ENCODE measurements at regions of chr1 and their contacts with region 1.

Region 1: DNA sequence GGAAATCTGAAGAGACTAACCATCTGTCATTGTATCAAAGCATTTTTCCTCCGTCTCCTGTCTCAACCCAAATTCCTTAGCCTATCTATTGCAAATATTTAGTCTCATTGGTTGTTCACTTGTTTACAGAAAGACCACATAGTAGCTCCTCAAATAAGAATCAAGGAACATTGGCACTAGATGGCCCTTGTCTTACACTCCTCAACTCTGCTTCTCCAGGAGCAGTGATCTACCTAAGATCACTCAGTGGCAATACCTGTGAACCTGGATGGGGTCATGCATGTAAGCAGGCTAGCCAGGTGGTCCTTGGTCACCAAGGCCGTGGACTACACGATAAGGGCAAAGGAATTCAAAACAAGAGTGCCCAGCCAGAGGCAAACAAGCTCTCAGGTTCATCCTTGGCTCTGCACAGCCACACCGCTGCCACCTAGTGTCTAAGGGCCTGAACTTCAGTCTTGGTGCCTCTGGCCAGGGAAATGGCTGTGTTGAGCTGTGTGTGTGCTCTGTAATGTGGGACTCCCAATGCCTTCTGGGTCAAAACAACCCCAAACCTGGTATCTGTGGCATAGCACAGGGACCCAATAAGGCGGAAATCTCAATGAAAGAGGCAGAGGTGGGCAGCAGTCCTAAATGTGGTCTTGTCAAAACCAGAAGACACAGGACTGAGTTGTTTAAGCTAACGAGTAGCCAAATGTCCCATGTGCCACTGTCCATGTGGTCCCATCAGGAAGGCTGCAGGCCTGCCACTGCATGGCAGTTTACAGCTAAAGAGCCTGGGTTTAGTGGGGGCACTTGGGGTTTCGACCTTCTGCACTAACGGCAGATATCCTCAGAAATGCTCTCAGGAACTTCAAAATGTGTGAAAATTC is 54.5 kb downstream of the GPR161 start:
- DNase-seq: peak; percentile 87
- H3K4me3 Mint-ChIP-seq: no peak overlapping the region
- H3K27ac Mint-ChIP-seq: no peak overlapping the region
- H3K4me1 Mint-ChIP-seq: no peaks in the 10 kb centered on the region
- H3K27me3 Mint-ChIP-seq: no peaks in the 10 kb centered on the region
- CTCF ChIP-seq: peak; percentile 96

Region 2: DNA sequence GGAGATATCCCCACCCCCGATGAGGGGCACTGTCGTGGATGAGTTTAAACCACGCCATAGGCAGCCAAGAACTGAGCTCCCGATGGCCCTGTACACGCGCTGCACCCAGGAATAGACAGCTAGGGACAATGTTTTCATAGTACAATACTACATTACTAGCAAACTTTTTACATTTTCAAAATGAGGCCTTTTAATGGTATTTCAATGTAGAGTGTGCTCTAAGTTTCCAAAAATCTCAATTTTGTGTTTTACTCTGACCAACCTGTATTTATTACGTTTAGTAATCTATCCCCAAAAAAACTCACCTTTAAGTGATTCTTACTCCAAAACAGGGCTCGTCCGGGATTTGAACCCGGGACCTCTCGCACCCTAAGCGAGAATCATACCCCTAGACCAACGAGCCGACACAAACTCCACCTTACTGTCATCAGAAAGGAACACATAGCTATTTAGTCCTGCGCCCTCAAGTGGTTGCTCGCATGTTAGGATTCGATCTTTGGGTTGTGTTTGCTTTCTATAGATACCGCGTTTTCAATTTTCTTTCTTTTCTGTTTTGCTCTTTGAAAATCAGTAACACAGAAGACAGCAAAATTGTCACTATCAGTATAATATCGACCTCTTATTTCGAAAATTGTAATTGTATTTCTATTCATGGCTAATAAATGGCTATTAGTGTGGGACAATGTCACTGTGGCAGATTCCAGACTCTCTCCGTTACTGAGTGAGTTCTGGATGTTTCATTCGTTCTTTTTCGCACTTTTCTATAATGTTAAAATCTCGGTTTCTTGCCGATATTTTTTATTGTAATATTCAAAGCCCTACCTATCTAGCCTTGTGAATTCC is 366.9 kb before region 1 on chr1:
- CTCF ChIA-PET with region 1: interaction called, 16 read pairs
- intact Hi-C with region 1: loop called (anchors 2 kb)
- DNase-seq: peak; percentile 88
- H3K4me3 Mint-ChIP-seq: peak overlapping the region; percentile 78
- H3K27ac Mint-ChIP-seq: peak overlapping the region; percentile 97
- H3K4me1 Mint-ChIP-seq: peaks cover 22% of the 10 kb centered on the region
- H3K27me3 Mint-ChIP-seq: no peaks in the 10 kb centered on the region
- CTCF ChIP-seq: peak; percentile 91

Region 3: DNA sequence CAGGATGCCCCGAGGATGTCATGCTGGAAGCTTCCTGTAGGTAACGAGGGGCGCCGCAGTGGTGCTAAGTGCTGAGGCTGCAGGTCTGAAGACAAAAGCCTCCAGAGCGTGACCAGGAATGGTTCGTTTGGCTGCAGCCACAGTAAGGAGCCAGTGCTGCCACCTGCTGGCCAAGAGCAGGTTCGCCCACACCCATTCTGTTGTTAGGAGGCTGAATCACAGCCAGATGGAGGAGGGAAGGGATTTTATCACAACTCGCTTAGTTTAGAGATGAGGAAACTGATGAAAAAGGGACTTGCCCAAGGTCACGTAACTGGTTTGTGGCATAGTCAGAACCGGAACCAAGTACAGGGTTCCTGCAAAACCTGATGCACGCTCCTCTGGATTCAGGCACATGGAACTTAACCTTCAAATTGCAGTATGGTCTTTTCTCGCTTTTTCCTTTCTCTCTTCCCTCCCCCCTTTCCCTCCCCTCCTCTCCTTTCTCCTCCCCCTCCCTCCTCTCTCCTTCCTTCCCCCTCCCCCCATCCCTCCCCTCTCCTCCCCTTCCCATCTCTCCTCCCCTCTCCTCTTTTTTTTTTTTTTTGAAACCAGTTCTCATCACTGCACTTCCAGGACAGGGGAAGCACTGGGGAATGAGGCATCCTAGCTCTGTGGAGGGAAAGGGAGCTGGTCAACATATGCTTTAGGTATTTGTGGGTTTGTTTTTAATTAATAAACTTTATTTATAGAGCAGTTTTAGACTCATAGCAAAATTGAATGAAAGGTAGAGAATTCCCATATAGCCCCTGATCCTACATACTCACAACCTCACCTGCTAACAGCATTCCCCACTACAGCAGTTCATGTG is 278.7 kb before region 1 on chr1:
- CTCF ChIA-PET with region 1: no interaction called
- intact Hi-C with region 1: loop called (anchors 5 kb)
- DNase-seq: peak; percentile 95
- H3K4me3 Mint-ChIP-seq: peak overlapping the region; percentile 20
- H3K27ac Mint-ChIP-seq: peak overlapping the region; percentile 3
- H3K4me1 Mint-ChIP-seq: peaks cover 24% of the 10 kb centered on the region
- H3K27me3 Mint-ChIP-seq: no peaks in the 10 kb centered on the region
- CTCF ChIP-seq: peak; percentile 95

Region 4: GRCh38 chr1:168145184-168146159 is 63.2 kb after region 1 on chr1:
- CTCF ChIA-PET with region 1: no interaction called
- intact Hi-C with region 1: loop called (anchors 5 kb)
- DNase-seq: peak; percentile 96
- H3K4me3 Mint-ChIP-seq: no peak overlapping the region
- H3K27ac Mint-ChIP-seq: no peak overlapping the region
- H3K4me1 Mint-ChIP-seq: no peaks in the 10 kb centered on the region
- H3K27me3 Mint-ChIP-seq: no peaks in the 10 kb centered on the region
- CTCF ChIP-seq: peak; percentile 98

Measured in Calu3 (cell line).